CD8-positive, alpha-beta T cell (primary cell): ENCODE measurements at regions of chr19 and their contacts with region 1.

Region 1: DNA sequence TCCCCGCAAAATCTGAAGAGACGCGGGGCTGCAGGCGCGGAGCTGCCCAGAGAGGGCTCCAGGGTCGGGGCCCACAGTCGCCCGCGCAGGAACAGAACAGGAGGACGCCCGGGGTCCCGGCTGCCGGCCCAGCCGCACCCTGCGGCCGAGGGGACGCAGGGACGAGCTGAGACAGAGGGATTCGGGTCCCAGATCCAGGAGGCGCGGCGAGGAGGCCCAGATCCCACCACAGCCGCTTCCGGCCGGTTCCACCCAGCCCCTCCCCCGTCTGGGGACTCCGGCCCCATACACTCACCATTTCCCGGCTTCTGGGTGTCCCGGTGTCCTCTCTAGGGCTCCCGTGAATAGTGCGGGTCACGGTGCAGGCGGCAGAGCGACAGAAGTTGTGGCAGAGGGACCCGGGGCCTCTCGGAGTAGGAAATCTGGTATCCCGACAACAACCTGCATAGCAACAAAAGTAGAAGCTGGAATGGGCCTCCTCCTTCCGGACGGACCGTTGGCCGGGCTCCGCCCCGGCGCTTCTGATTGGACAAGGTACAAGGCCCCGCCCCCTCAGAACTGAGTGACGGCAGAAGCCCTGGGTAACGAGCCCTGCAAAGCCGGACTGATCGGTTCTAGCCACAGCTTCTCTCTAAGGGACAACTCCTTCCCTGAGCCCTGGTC is at the start of gene ZNF20:
- DNase-seq: peak; percentile 71 to 92 (median 89)
- ATAC-seq: peak; percentile 86
- H3K4me3 ChIP-seq: peak within 1 kb of the TSS; percentile 85 to 94
- H3K4me3 Mint-ChIP-seq: peak within 1 kb of the TSS; percentile 84
- H3K27ac ChIP-seq: peak within 1 kb of the TSS; percentile 44 to 50
- H3K27ac Mint-ChIP-seq: peak within 1 kb of the TSS; percentile 67
- H3K4me1 ChIP-seq: peaks cover 16% of the 10 kb centered on the region
- H3K4me1 Mint-ChIP-seq: peaks cover 30% of the 10 kb centered on the region
- H3K27me3 ChIP-seq: no peaks in the 10 kb centered on the region
- H3K27me3 Mint-ChIP-seq: no peaks in the 10 kb centered on the region
- CTCF ChIP-seq: no peak
- total RNA-seq, gene ZNF20: 0.95 to 1.00 TPM

Region 2: GRCh38 chr19:11519138-11519537 is 620.9 kb before region 1 on chr19:
- CTCF ChIA-PET with region 1: no interaction called
- POLR2A ChIA-PET with region 1: no interaction called
- intact Hi-C with region 1: no loop called
- DNase-seq: no peak
- ATAC-seq: no peak
- H3K4me3 ChIP-seq: no peak overlapping the region
- H3K4me3 Mint-ChIP-seq: no peak overlapping the region
- H3K27ac ChIP-seq: no peak overlapping the region
- H3K27ac Mint-ChIP-seq: no peak overlapping the region
- H3K4me1 ChIP-seq: no peaks in the 10 kb centered on the region
- H3K4me1 Mint-ChIP-seq: peaks cover 2% of the 10 kb centered on the region
- H3K27me3 ChIP-seq: no peaks in the 10 kb centered on the region
- H3K27me3 Mint-ChIP-seq: no peaks in the 10 kb centered on the region
- CTCF ChIP-seq: no peak

Region 3: GRCh38 chr19:11814029-11814699 is 325.9 kb before region 1 on chr19 and contains the start of gene ZNF440:
- CTCF ChIA-PET with region 1: interaction called, 9 read pairs
- POLR2A ChIA-PET with region 1: no interaction called
- intact Hi-C with region 1: loop called in 1 of 2 experiments (anchors 5 kb)
- DNase-seq: peak; percentile 66 to 88 (median 79)
- ATAC-seq: peak; percentile 99
- H3K4me3 ChIP-seq: peak within 1 kb of the TSS; percentile 89 to 95
- H3K4me3 Mint-ChIP-seq: peak within 1 kb of the TSS; percentile 95
- H3K27ac ChIP-seq: peak within 1 kb of the TSS; percentile 45 to 51
- H3K27ac Mint-ChIP-seq: peak within 1 kb of the TSS; percentile 86
- H3K4me1 ChIP-seq: peaks cover 6% of the 10 kb centered on the region
- H3K4me1 Mint-ChIP-seq: peaks cover 32% of the 10 kb centered on the region
- H3K27me3 ChIP-seq: no peaks in the 10 kb centered on the region
- H3K27me3 Mint-ChIP-seq: no peaks in the 10 kb centered on the region
- CTCF ChIP-seq: no peak
- total RNA-seq, gene ZNF440: 6.4 to 7.9 TPM

Region 4: DNA sequence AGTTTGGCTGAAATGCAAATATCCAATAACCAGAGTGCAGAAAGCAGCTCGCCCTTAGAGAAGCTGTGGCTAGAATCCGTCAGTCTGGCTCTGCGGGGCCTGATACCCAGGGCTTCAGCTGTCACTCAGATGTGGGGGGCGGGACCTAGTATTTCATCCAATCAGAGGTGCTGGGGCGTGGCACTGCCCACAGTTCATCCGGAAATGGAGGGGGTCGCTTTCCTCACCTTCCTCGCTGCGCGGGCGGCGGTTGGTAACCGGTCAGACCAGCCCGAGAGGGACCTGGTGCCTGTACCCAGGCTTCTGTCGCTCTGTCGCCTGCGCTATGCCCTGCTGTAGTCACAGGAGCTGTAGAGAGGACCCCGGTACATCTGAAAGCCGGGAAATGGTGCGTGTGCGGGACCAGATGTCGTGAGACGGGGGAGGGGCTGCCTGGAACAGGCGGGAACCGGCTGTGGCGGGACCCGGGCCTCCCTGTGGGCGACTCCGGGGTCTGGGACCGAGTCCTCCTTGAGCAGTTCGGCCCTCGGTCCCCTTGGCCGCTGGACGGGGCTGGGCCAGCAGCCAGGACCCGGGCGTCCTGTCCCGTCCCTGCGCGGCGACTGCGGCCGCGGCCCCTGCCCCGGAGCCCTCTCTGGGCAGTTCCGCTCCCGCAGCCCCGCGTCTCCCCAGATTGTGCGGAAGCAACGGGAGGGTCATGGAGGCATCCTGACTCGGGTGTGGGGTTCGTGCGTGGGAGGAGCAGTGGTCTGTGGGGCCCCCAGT is 214.9 kb before region 1 on chr19 and contains the start of gene ZNF700:
- CTCF ChIA-PET with region 1: interaction called, 56 read pairs
- POLR2A ChIA-PET with region 1: interaction called, 3 read pairs
- intact Hi-C with region 1: loop called (anchors 1 kb)
- DNase-seq: peak; percentile 83 to 95 (median 92)
- ATAC-seq: peak; percentile 86
- H3K4me3 ChIP-seq: peak within 1 kb of the TSS; percentile 82 to 96
- H3K4me3 Mint-ChIP-seq: peak within 1 kb of the TSS; percentile 94
- H3K27ac ChIP-seq: peak within 1 kb of the TSS; percentile 85 to 86
- H3K27ac Mint-ChIP-seq: peak within 1 kb of the TSS; percentile 97
- H3K4me1 ChIP-seq: peaks cover 24% of the 10 kb centered on the region
- H3K4me1 Mint-ChIP-seq: peaks cover 53% of the 10 kb centered on the region
- H3K27me3 ChIP-seq: no peaks in the 10 kb centered on the region
- H3K27me3 Mint-ChIP-seq: no peaks in the 10 kb centered on the region
- CTCF ChIP-seq: no peak
- total RNA-seq, gene ZNF700: 10.8 to 10.9 TPM

Region 5: DNA sequence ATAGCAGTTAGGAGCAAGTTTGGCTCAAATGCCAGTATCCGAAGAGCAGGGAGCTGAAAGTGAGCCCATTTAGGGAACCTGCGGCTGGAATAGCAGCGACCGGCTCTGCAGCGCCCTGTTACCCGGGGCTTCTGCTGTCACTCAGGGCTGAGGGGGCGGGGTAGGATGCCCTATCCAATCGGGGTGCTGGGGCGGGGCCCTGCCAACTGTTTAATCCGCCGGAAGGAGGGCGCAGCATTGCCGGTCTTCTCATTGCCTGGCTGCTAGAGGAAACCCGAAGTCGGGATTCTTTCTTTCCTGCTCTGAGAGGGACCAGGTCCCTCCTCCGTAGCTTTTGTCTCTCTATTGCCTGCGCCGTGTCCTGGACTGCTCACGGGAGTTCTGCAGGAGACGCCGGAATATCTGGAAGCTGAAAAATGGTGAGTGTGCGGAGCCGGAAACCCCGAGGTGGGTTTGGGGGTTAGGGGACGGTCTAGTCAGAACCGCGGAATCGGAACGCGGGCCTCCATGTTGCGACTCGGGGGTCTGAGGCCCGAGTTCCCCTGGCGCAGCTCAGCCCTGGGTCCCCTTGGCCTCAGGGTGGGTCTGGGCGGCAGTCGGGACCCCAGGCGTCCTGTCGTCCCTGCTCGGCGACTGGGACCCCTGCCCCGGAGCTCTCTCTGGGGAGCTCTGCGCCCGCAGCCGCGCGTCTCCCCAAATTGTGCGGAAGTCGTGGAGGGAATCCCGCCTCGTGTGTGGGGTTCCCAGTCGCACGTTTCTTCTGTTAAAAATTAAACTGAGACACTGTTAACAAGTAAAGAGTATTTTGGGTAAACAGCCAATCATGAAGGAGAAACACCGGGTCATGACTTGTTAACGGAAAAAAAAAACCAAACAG is 152.4 kb before region 1 on chr19:
- CTCF ChIA-PET with region 1: interaction called, 24 read pairs
- POLR2A ChIA-PET with region 1: no interaction called
- intact Hi-C with region 1: loop called in 1 of 2 experiments (anchors 1 kb)
- DNase-seq: peak; percentile 82 to 94 (median 91)
- ATAC-seq: peak; percentile 92
- H3K4me3 ChIP-seq: peak overlapping the region; percentile 89 to 98
- H3K4me3 Mint-ChIP-seq: peak overlapping the region; percentile 99
- H3K27ac ChIP-seq: peak overlapping the region; percentile 79 to 83
- H3K27ac Mint-ChIP-seq: peak overlapping the region; percentile 91
- H3K4me1 ChIP-seq: peaks cover 10% of the 10 kb centered on the region
- H3K4me1 Mint-ChIP-seq: peaks cover 26% of the 10 kb centered on the region
- H3K27me3 ChIP-seq: no peaks in the 10 kb centered on the region
- H3K27me3 Mint-ChIP-seq: no peaks in the 10 kb centered on the region
- CTCF ChIP-seq: no peak

Region 6: GRCh38 chr19:12064590-12065538 is 75.2 kb before region 1 on chr19 and contains the start of gene ZNF844:
- CTCF ChIA-PET with region 1: interaction called, 49 read pairs
- POLR2A ChIA-PET with region 1: interaction called, 3 read pairs
- intact Hi-C with region 1: no loop called
- DNase-seq: peak; percentile 59 to 83 (median 69)
- ATAC-seq: peak; percentile 84
- H3K4me3 ChIP-seq: peak within 1 kb of the TSS; percentile 66 to 71
- H3K4me3 Mint-ChIP-seq: peak within 1 kb of the TSS; percentile 89
- H3K27ac ChIP-seq: peak within 1 kb of the TSS; percentile 69 to 71
- H3K27ac Mint-ChIP-seq: peak within 1 kb of the TSS; percentile 82
- H3K4me1 ChIP-seq: peaks cover 8% of the 10 kb centered on the region
- H3K4me1 Mint-ChIP-seq: peaks cover 11% of the 10 kb centered on the region
- H3K27me3 ChIP-seq: no peaks in the 10 kb centered on the region
- H3K27me3 Mint-ChIP-seq: no peaks in the 10 kb centered on the region
- CTCF ChIP-seq: no peak
- total RNA-seq, gene ZNF844: 12.1 to 14.6 TPM

Region 7: DNA sequence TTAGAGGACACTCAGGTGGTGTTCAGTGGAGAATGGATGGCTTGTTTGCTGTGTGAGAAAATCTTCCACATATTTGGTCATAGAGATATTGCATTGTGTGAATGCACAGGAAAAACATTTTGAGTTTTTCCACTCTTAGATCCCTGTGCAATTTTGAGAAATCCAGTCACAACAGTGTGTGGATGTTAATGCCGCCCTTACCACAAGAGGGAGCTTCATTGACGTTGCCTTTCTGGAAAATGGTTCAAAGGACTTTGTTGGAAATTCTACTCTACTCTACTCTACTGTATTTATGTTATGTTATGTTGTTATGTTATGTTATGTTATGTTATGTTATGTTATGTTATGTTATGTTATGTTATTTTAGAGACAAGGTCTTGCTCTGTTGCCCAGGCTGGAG is 13.3 kb before region 1 on chr19:
- CTCF ChIA-PET with region 1: interaction called, 15 read pairs
- POLR2A ChIA-PET with region 1: no interaction called
- intact Hi-C with region 1: no loop called
- DNase-seq: peak in 4 of 9 experiments; percentile 6 to 37 (median 24)
- ATAC-seq: no peak
- H3K4me3 ChIP-seq: no peak overlapping the region
- H3K4me3 Mint-ChIP-seq: no peak overlapping the region
- H3K27ac ChIP-seq: no peak overlapping the region
- H3K27ac Mint-ChIP-seq: no peak overlapping the region
- H3K4me1 ChIP-seq: no peaks in the 10 kb centered on the region
- H3K4me1 Mint-ChIP-seq: peaks cover 2% of the 10 kb centered on the region
- H3K27me3 ChIP-seq: no peaks in the 10 kb centered on the region
- H3K27me3 Mint-ChIP-seq: no peaks in the 10 kb centered on the region
- CTCF ChIP-seq: peak; percentile 48

Region 8: GRCh38 chr19:12162882-12163806 is 23.1 kb after region 1 on chr19 and contains the start of gene ZNF136:
- CTCF ChIA-PET with region 1: interaction called, 22 read pairs
- POLR2A ChIA-PET with region 1: no interaction called
- intact Hi-C with region 1: loop called in 1 of 2 experiments (anchors 1 kb)
- DNase-seq: peak; percentile 84 to 97 (median 91)
- ATAC-seq: peak; percentile 99
- H3K4me3 ChIP-seq: peak within 1 kb of the TSS; percentile 83 to 86
- H3K4me3 Mint-ChIP-seq: peak within 1 kb of the TSS; percentile 96
- H3K27ac ChIP-seq: peak within 1 kb of the TSS; percentile 93 to 96
- H3K27ac Mint-ChIP-seq: peak within 1 kb of the TSS; percentile 98
- H3K4me1 ChIP-seq: peaks cover 25% of the 10 kb centered on the region
- H3K4me1 Mint-ChIP-seq: peaks cover 46% of the 10 kb centered on the region
- H3K27me3 ChIP-seq: no peaks in the 10 kb centered on the region
- H3K27me3 Mint-ChIP-seq: no peaks in the 10 kb centered on the region
- CTCF ChIP-seq: no peak
- total RNA-seq, gene ZNF136: 41.7 to 42.1 TPM